Activated T-helper 2 cell treated with anti-CD3 and anti-CD28 coated beads, Interferon-gamma antibody, Interleukin-2, Interleukin-4, amounts not matched to agents 10 μg/mL and 5 μg/mL and 100 μg/mL, durations not matched to agents 14 hours and 24 hours and 36 hours (primary cell): ENCODE measurements at regions of chrX and their contacts with region 1.

Region 1: GRCh38 chrX:37745354-37745753 is 34.5 kb upstream of the CYBB start:
- DNase-seq: peak; percentile 62
- H3K4me3 Mint-ChIP-seq: no peak overlapping the region
- H3K27ac Mint-ChIP-seq: peak overlapping the region; percentile 14
- H3K4me1 Mint-ChIP-seq: peaks cover 19% of the 10 kb centered on the region
- H3K27me3 Mint-ChIP-seq: peaks cover 26% of the 10 kb centered on the region

Region 2: GRCh38 chrX:37711991-37712390 is 33.4 kb before region 1 on chrX:
- intact Hi-C with region 1: no loop called
- DNase-seq: no peak
- H3K4me3 Mint-ChIP-seq: no peak overlapping the region
- H3K27ac Mint-ChIP-seq: no peak overlapping the region
- H3K4me1 Mint-ChIP-seq: peaks cover 5% of the 10 kb centered on the region
- H3K27me3 Mint-ChIP-seq: no peaks in the 10 kb centered on the region

Region 3: DNA sequence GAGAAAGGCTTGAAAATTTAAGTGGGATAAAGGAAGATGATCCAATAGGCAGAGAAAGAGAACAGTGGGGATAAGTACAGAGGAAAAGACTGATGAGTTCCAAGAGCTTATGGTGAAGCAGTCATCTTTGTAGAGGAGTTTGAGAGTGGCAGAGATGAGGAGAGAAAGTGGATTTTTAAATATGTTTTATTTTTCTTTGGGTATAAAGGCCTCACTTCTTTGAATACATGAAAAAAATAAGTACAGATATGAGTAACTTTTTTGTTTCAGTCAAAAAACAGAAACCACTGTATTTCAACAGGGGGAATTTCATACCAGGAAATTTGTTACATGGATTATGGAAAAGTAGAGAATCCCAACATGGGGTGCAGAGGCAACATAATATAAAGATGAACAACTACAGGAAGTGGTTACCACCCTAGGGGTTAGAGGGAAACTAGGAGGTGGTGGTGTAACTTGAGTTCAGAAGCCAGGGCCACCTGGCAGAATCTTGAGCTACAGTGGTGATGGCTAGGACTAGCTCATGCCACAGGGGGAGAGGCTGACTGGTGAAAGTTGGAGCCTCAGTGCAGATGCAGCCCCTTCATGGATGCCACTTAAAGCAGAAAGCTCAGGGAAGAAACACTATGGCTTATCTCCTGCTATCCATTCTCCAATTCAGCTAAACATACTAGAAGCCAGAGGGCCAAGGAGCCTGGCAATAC is 31.1 kb after region 1 on chrX:
- intact Hi-C with region 1: loop called (anchors 2 kb)
- DNase-seq: no peak
- H3K4me3 Mint-ChIP-seq: peak overlapping the region; percentile 26
- H3K27ac Mint-ChIP-seq: peak overlapping the region; percentile 28
- H3K4me1 Mint-ChIP-seq: peaks cover 20% of the 10 kb centered on the region
- H3K27me3 Mint-ChIP-seq: no peaks in the 10 kb centered on the region

Region 4: DNA sequence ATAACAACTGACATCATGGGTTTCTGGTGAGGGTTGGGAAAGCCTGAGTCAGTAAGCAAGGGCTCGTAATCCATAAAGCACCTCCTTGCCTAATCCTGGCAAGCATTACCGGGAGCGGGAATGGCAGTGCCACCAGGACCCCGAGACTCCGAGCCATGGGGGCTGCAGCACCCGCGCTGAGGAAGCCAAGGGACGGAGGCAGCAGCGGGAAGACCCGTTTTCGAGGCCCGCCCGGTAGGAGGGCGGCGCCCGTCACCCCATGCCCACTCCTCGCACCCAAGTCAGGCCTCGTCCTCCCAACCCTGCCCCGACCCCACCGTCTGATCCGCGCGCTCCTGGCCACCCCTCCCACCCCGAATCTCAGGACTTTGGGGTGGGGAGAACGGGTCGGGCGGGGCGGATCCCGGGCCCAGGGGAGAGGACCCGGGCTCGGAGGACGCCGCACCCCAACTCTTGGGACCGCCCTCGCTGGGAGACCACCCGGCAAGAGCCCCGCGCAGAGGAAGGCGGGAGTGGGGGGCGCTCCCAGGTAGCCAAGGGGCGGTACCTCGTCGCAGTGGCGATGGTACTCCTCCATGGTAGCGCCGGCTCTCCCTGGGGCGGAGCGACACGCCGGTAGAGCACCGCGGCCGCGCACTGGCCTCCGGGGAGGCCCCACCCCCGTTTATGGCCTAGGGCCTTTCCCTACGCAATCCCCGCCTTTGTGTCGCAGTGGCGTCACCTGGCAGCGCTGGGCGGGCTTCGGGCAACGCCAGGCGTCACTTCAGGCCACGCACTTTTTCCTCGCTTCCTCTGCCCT is 101.8 kb after region 1 on chrX and contains the start of gene DYNLT3:
- intact Hi-C with region 1: loop called (anchors 1 kb)
- DNase-seq: peak; percentile 74
- H3K4me3 Mint-ChIP-seq: peak within 1 kb of the TSS; percentile 72
- H3K27ac Mint-ChIP-seq: peak within 1 kb of the TSS; percentile 89
- H3K4me1 Mint-ChIP-seq: peaks cover 20% of the 10 kb centered on the region
- H3K27me3 Mint-ChIP-seq: no peaks in the 10 kb centered on the region
- total RNA-seq, gene DYNLT3: 17.6 and 19.9 TPM in 2 replicates

Region 5: GRCh38 chrX:38166478-38167083 is 421.2 kb after region 1 on chrX:
- intact Hi-C with region 1: loop called (anchors 5 kb)
- DNase-seq: no peak
- H3K4me3 Mint-ChIP-seq: no peak overlapping the region
- H3K27ac Mint-ChIP-seq: no peak overlapping the region
- H3K4me1 Mint-ChIP-seq: no peaks in the 10 kb centered on the region
- H3K27me3 Mint-ChIP-seq: no peaks in the 10 kb centered on the region